ENCODE measurements at regions of chr18 and their contacts with region 1.

Region 1: DNA sequence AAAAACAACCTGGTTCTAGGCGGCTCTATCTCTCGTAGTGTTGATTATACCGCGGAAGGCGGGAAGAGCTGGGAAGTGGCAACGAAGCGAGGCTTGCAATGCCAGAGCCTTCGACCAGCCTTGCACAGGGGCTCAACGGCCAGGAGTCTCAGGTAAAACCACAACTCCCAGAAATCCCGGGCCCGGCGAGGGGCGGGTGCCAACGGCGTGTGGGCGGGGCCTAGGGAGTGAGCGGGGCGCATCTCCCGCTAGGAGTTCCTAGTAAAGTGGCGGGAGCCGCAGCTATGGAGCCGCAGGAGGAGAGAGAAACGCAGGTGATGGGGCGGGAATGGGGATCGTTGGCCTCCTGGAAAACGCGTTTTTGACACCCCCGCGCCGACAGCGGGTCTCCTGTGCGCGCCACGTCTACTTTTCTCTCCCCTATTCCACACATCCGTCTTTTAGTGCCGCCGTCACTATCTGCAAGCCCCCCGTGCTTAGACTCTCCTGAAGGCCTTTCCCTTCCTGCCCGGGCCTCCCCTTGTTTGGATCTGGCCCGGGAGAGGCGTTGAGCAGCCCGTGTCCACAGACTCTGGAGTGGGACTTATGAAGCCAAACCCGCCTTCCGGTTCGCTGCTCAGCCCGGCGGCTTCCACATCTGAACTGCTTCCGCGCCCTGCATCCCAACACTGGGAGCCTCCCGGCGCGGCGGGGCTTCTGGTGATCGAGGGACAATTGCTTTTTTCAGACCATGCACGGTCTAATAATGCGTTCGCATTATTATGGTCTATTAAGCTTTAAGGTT is at the start of gene HAUS1:
- DNase-seq: peak; percentile 91 to 93 (median 92)
- ATAC-seq: peak; percentile 99
- H3K4me3 ChIP-seq: peak within 1 kb of the TSS; percentile 26 to 63
- H3K27ac ChIP-seq: peak within 1 kb of the TSS in 3 of 4 donors; percentile 58 to 82 (median 75)
- H3K4me1 ChIP-seq: peaks cover 5% of the 10 kb centered on the region
- H3K27me3 ChIP-seq: no peaks in the 10 kb centered on the region
- CTCF ChIP-seq: no peak
- POLR2A ChIP-seq: peak; percentile 46 to 86 (median 79)
- total RNA-seq, gene HAUS1: 6.0 to 13.2 TPM

Region 2: GRCh38 chr18:46173393-46174341 is 69.3 kb after region 1 on chr18:
- intact Hi-C with region 1: loop called (anchors 10 kb)
- DNase-seq: peak; percentile 90 to 94 (median 92)
- ATAC-seq: peak; percentile 96
- H3K4me3 ChIP-seq: peak overlapping the region; percentile 69 to 94
- H3K27ac ChIP-seq: peak overlapping the region; percentile 78 to 91 (median 88)
- H3K4me1 ChIP-seq: peaks cover 25% of the 10 kb centered on the region
- H3K27me3 ChIP-seq: no peaks in the 10 kb centered on the region
- CTCF ChIP-seq: peak; percentile 77 to 88 (median 82)
- POLR2A ChIP-seq: peak; percentile 46 to 84 (median 82)

Region 3: GRCh38 chr18:46281185-46282176 is 177.2 kb after region 1 on chr18:
- intact Hi-C with region 1: no loop called
- DNase-seq: peak; percentile 54 to 71 (median 58)
- ATAC-seq: peak; percentile 82
- H3K4me3 ChIP-seq: no peak overlapping the region
- H3K27ac ChIP-seq: no peak overlapping the region
- H3K4me1 ChIP-seq: no peaks in the 10 kb centered on the region
- H3K27me3 ChIP-seq: no peaks in the 10 kb centered on the region
- CTCF ChIP-seq: peak; percentile 62 to 93 (median 75)
- POLR2A ChIP-seq: no peak

Measured in body of pancreas (tissue), 4 donors.